CD14-positive monocyte (primary cell): ENCODE measurements at regions of chr20 and their contacts with region 1.

Region 1: GRCh38 chr20:5741089-5741488 is 9.1 kb upstream of the SHLD1 start:
- DNase-seq: no peak
- H3K4me3 ChIP-seq: no peak overlapping the region
- H3K4me3 Mint-ChIP-seq: no peak overlapping the region
- H3K27ac ChIP-seq: no peak overlapping the region
- H3K27ac Mint-ChIP-seq: no peak overlapping the region
- H3K4me1 ChIP-seq: peaks cover 18 to 20% of the 10 kb centered on the region in 2 donors
- H3K4me1 Mint-ChIP-seq: peaks cover 20% of the 10 kb centered on the region
- H3K27me3 ChIP-seq: no peaks in the 10 kb centered on the region
- H3K27me3 Mint-ChIP-seq: peaks cover 10 to 21% (median 16%) of the 10 kb centered on the region in 3 donors
- CTCF ChIP-seq: no peak

Region 2: GRCh38 chr20:5633751-5634365 is 107.2 kb before region 1 on chr20:
- intact Hi-C with region 1: no loop called
- DNase-seq: no peak
- H3K4me3 ChIP-seq: no peak overlapping the region
- H3K4me3 Mint-ChIP-seq: no peak overlapping the region
- H3K27ac ChIP-seq: no peak overlapping the region
- H3K27ac Mint-ChIP-seq: no peak overlapping the region
- H3K4me1 ChIP-seq: peaks cover 0 to 4% of the 10 kb centered on the region in 2 donors
- H3K4me1 Mint-ChIP-seq: peaks cover 5% of the 10 kb centered on the region
- H3K27me3 ChIP-seq: no peaks in the 10 kb centered on the region
- H3K27me3 Mint-ChIP-seq: peaks cover 0 to 2% (median 0%) of the 10 kb centered on the region in 3 donors
- CTCF ChIP-seq: no peak

Region 3: DNA sequence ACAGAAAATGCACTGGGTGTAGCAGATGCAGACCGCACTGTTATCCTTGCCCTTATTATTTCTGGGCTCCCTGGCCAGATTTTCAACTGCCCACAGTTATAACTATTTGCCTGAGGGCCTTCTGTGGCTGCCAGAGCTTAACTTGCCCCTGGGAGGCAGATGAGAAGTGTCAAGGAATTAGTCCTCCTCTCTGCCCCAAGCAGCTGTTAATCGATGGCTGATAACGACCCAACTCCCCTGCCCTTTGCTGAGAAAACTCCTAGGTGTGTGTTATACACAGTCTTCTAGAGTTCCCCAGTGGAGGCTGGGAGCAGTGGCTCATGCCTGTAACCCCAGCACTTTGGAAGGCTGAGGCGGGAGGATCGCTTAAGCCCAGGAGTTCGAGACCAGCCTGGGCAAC is 35.3 kb before region 1 on chr20:
- intact Hi-C with region 1: loop called in 1 of 2 experiments (anchors 5 kb)
- DNase-seq: no peak
- H3K4me3 ChIP-seq: no peak overlapping the region
- H3K4me3 Mint-ChIP-seq: no peak overlapping the region
- H3K27ac ChIP-seq: no peak overlapping the region
- H3K27ac Mint-ChIP-seq: no peak overlapping the region
- H3K4me1 ChIP-seq: peaks cover 7 to 11% of the 10 kb centered on the region in 2 donors
- H3K4me1 Mint-ChIP-seq: peaks cover 11% of the 10 kb centered on the region
- H3K27me3 ChIP-seq: peaks cover 0 to 2% of the 10 kb centered on the region in 2 donors
- H3K27me3 Mint-ChIP-seq: peaks cover 2 to 9% (median 2%) of the 10 kb centered on the region in 3 donors
- CTCF ChIP-seq: no peak